CD8-positive, alpha-beta memory T cell (primary cell): ENCODE measurements at regions of chr12 and their contacts with region 1.

Region 1: DNA sequence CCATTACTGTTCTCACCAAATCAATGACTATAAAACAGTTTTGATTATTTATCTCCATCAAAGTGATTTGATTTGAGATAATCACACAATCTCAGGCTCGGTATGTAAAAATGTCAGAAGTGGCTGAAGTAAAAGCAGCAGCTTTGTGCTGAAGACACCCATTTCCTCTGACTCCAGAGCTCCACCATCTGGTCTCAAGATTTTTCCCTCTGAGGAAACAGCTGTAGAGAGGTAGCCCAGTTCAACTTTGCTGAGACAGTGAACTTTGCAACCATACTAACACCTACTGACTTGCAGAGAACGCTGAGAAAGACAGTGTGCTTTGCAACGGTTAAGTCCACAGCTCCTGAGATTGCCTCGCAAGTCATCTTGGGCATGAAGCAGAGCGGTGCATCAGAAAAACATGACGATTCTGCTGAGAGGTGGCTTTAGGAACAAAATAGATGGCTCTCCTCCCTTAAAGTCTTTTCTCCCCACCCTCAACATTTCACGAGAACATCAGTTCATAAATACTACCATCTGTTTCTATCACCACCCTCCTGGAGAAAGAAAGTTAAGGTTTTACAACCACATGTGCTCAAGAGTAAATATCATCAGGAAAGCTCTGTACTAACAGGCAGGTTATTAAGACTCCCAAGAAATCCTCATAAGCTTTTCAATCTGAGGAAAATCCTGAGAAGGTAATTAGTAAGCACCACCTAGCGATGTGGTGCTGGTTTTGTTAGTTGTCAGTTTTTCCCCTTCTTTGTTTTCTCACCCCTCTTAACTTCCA is 34.8 kb downstream of the HIGD1C start:
- DNase-seq: peak in 2 of 5 donors; percentile 22 to 30
- H3K4me3 ChIP-seq: no peak overlapping the region
- H3K4me3 Mint-ChIP-seq: no peak overlapping the region
- H3K27ac ChIP-seq: no peak overlapping the region
- H3K27ac Mint-ChIP-seq: peak overlapping the region in 6 of 8 donors; percentile 32 to 85 (median 62)
- H3K4me1 ChIP-seq: no peaks in the 10 kb centered on the region
- H3K4me1 Mint-ChIP-seq: peaks cover 0 to 9% (median 3%) of the 10 kb centered on the region in 3 donors
- H3K27me3 ChIP-seq: no peaks in the 10 kb centered on the region
- H3K27me3 Mint-ChIP-seq: no peaks in the 10 kb centered on the region

Region 2: DNA sequence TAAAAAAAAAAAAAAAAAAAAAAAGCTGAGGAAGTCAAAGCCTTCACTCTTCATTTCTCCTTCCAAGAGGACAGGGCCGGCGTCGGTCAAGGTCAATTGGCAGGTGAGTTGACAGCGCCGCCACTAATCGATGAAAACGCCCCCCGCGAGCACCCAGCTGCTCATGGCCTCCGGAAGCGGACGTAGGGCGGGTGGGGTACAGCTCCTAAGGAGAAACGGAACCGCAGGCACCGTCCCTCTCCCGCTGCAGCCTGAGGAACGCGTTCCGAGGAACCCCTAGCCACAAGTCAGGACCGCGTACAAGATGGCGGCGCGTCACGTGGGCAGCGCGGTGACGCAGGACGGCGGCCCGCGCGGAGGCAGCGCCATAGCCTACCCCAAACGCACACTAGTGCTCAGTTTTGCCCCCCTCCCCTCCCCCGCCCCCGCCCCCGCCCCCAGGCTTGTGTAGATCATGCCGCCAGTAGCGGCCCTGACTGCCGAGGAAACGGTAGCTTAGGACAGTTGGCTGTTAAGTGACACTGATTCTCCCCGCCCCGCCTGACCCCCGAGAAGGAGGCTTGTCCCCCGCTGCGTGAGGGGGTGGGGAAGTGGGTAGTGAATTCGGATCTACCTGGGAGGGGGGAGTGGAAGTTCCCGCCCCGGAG is 223.4 kb before region 1 on chr12 and contains the start of gene ATF1:
- CTCF ChIA-PET with region 1: interaction called, 26 read pairs
- POLR2A ChIA-PET with region 1: interaction called, 3 read pairs
- DNase-seq: peak; percentile 82 to 93 (median 89)
- H3K4me3 ChIP-seq: peak within 1 kb of the TSS; percentile 86
- H3K4me3 Mint-ChIP-seq: peak within 1 kb of the TSS; percentile 85 to 98 (median 89)
- H3K27ac ChIP-seq: peak within 1 kb of the TSS; percentile 89
- H3K27ac Mint-ChIP-seq: peak within 1 kb of the TSS; percentile 95 to 98 (median 96)
- H3K4me1 ChIP-seq: peaks cover 21% of the 10 kb centered on the region
- H3K4me1 Mint-ChIP-seq: peaks cover 26 to 49% (median 41%) of the 10 kb centered on the region in 3 donors
- H3K27me3 ChIP-seq: no peaks in the 10 kb centered on the region
- H3K27me3 Mint-ChIP-seq: peaks cover 0 to 3% of the 10 kb centered on the region in 2 donors
- total RNA-seq, gene ATF1: 50.8 to 54.0 TPM

Region 3: GRCh38 chr12:50825372-50825838 is 161.7 kb before region 1 on chr12:
- CTCF ChIA-PET with region 1: interaction called, 38 read pairs
- POLR2A ChIA-PET with region 1: interaction called, 5 read pairs
- DNase-seq: peak in 2 of 5 donors; percentile 49 to 63
- H3K4me3 ChIP-seq: no peak overlapping the region
- H3K4me3 Mint-ChIP-seq: peak overlapping the region in 1 of 7 donors; percentile 27
- H3K27ac ChIP-seq: no peak overlapping the region
- H3K27ac Mint-ChIP-seq: peak overlapping the region; percentile 34 to 92 (median 76)
- H3K4me1 ChIP-seq: no peaks in the 10 kb centered on the region
- H3K4me1 Mint-ChIP-seq: peaks cover 0 to 7% (median 6%) of the 10 kb centered on the region in 3 donors
- H3K27me3 ChIP-seq: no peaks in the 10 kb centered on the region
- H3K27me3 Mint-ChIP-seq: no peaks in the 10 kb centered on the region